Activated B cell treated with CpG ODN at 0.5 μM for 24 hours (primary cell): ENCODE measurements at regions of chr5 and their contacts with region 1.

Region 1: GRCh38 chr5:72523960-72524582 is 16.9 kb upstream of the ZNF366 start:
- DNase-seq: no peak
- ATAC-seq: no peak
- H3K4me3 Mint-ChIP-seq: no peak overlapping the region
- H3K27ac Mint-ChIP-seq: no peak overlapping the region
- H3K4me1 Mint-ChIP-seq: no peaks in the 10 kb centered on the region
- H3K27me3 Mint-ChIP-seq: no peaks in the 10 kb centered on the region
- CTCF ChIP-seq: no peak

Region 2: DNA sequence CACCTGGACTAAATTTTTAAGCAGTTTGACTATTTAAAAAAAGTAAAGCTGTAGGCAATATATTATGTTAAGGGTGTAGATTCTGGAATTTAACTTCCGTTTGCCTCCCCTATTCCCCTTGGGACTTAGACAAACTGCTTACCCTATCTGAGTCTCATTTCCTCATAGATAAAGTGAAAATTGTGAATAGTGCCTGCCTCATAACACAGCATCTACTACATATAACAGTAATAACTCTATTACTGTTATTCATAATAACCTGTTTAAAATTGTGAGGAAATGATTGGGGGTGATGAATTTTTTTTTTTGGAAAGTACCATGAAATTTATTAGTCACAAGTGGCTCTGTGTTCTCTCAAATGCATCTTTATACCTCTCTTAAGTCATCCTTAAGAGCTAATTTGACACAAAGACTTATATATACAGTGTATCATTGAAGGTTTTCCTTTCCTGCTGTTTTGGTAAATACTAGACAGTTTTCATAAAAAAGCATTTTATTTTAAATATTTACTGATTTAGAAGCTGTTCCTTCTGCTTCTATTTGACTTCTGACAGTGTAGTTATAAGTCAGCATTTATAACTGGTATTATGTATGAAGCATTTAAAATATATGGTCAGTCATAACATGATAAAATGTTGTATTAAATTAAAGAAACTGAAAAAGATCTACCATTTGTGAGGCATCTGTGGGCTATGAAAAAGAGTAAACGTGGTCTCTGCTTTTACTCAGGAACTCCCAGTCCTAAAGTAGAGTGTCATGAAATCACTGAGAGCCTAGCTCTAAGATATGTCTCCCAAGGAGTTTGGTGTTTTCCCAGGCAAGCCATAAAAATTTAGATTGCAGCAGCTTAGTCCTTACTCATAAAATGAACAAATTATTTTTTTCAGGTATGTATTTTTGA is 890.6 kb before region 1 on chr5:
- CTCF ChIA-PET with region 1: no interaction called
- POLR2A ChIA-PET with region 1: no interaction called
- intact Hi-C with region 1: no loop called
- DNase-seq: no peak
- ATAC-seq: peak; percentile 61
- H3K4me3 Mint-ChIP-seq: no peak overlapping the region
- H3K27ac Mint-ChIP-seq: no peak overlapping the region
- H3K4me1 Mint-ChIP-seq: peaks cover 12% of the 10 kb centered on the region
- H3K27me3 Mint-ChIP-seq: no peaks in the 10 kb centered on the region
- CTCF ChIP-seq: no peak

Region 3: DNA sequence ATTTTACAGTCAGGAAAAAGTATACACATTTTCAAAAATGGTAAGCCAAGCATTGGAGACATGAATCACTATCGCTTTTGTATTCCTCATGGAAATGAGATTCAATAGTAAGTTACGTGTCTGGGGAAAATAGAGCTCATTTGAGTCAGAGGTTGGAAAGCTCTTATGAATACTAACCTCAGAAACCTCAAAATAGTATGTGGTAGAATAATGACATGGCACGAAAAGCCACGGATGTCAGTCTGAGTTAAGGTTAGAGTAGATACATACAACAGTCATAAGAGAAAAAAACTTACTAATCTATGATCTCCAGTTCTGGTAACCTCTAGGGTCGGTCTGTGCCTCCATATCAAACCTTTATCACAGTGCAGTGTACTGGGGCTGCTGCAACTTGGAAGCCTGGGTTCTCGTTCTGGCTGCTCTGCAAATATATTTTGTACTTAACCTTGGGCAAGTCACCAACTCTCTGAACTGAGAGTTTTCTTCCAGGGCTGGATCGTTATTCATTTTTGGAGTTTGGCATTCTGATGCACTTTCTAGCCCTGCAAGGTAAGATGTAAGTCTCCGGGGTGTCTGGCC is 385.0 kb before region 1 on chr5:
- CTCF ChIA-PET with region 1: no interaction called
- POLR2A ChIA-PET with region 1: no interaction called
- intact Hi-C with region 1: loop called (anchors 1 kb)
- DNase-seq: no peak
- ATAC-seq: no peak
- H3K4me3 Mint-ChIP-seq: no peak overlapping the region
- H3K27ac Mint-ChIP-seq: no peak overlapping the region
- H3K4me1 Mint-ChIP-seq: no peaks in the 10 kb centered on the region
- H3K27me3 Mint-ChIP-seq: peaks cover 13% of the 10 kb centered on the region
- CTCF ChIP-seq: no peak

Region 4: DNA sequence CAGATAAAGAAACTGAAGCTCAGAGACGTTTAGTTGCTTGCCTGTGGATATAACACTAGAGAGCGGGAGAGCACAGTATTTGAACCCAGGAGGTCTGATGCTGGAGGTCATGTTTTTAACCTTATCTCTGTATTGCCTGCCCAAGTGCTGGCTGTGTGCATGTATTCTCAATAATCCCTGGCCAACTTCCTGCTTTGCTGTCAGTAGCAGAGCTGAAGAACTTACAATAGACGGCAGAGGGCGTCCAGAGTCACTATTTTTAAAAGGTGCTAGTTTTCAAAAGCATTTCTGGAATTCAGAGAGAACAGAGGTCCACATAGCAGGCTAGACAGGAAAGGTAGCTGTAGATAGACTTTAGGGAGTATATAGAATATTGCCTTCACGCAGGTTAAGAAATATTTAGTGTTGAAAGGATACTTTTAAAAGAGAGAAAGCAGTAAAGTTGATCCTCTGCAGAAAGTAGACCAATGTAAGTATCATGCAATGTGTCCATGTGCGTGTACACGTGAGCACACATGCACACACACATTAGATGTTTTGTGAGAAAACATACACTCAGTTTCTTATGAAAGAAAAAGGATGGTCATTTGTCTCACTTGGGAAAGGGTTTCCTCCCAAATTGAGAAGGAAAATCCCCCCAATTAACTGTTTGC is 157.6 kb before region 1 on chr5:
- CTCF ChIA-PET with region 1: interaction called, 59 read pairs
- POLR2A ChIA-PET with region 1: no interaction called
- intact Hi-C with region 1: loop called (anchors 1 kb)
- DNase-seq: no peak
- ATAC-seq: peak; percentile 68
- H3K4me3 Mint-ChIP-seq: no peak overlapping the region
- H3K27ac Mint-ChIP-seq: no peak overlapping the region
- H3K4me1 Mint-ChIP-seq: peaks cover 11% of the 10 kb centered on the region
- H3K27me3 Mint-ChIP-seq: no peaks in the 10 kb centered on the region
- CTCF ChIP-seq: no peak

Region 5: GRCh38 chr5:72394688-72395087 is 129.4 kb before region 1 on chr5:
- CTCF ChIA-PET with region 1: no interaction called
- POLR2A ChIA-PET with region 1: no interaction called
- intact Hi-C with region 1: loop called (anchors 2 kb)
- DNase-seq: no peak
- ATAC-seq: no peak
- H3K4me3 Mint-ChIP-seq: no peak overlapping the region
- H3K27ac Mint-ChIP-seq: no peak overlapping the region
- H3K4me1 Mint-ChIP-seq: peaks cover 3% of the 10 kb centered on the region
- H3K27me3 Mint-ChIP-seq: peaks cover 16% of the 10 kb centered on the region
- CTCF ChIP-seq: no peak

Region 6: DNA sequence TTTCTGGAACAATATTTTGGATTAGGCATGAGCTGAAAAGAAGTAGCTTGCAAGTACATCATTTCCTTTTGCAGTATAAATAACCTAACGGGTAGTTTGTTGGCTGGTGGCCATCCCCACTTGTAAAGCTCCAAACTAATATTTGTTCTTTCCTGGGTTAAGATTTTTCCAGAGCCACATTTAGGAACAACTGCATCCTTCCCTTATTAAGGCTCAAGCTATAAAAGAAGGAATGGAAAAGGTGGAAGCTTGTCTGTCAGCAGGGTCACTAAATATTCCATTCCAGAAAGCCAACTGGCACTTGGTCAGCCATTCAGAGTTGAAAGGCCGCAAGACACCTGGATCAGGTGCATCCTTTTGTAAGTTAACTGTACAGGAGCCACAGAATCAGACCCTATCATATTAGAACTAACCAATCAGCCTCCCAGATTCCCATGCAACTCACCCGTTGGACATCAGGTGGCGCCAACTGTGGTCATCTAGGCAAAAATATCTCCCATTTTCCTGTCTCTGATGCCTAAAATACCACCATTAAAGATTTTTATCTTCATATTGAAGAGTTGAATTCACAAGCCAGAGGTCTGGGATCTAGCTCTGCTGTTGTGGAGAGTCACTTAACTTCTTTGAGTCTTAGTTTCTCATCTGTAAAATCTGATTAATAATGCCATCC is 121.0 kb before region 1 on chr5:
- CTCF ChIA-PET with region 1: interaction called, 8 read pairs
- POLR2A ChIA-PET with region 1: no interaction called
- intact Hi-C with region 1: loop called (anchors 1 kb)
- DNase-seq: no peak
- ATAC-seq: no peak
- H3K4me3 Mint-ChIP-seq: no peak overlapping the region
- H3K27ac Mint-ChIP-seq: no peak overlapping the region
- H3K4me1 Mint-ChIP-seq: peaks cover 3% of the 10 kb centered on the region
- H3K27me3 Mint-ChIP-seq: peaks cover 15% of the 10 kb centered on the region
- CTCF ChIP-seq: no peak